PC-9 (cell line): ENCODE measurements at regions of chr5 and their contacts with region 1.

Region 1: GRCh38 chr5:37931541-37931940 is 91.7 kb upstream of the GDNF start:
- DNase-seq: no peak
- H3K4me3 ChIP-seq: no peak overlapping the region
- H3K27ac ChIP-seq: no peak overlapping the region
- H3K4me1 ChIP-seq: no peaks in the 10 kb centered on the region
- H3K27me3 ChIP-seq: peaks cover 38% of the 10 kb centered on the region
- CTCF ChIP-seq: no peak

Region 2: DNA sequence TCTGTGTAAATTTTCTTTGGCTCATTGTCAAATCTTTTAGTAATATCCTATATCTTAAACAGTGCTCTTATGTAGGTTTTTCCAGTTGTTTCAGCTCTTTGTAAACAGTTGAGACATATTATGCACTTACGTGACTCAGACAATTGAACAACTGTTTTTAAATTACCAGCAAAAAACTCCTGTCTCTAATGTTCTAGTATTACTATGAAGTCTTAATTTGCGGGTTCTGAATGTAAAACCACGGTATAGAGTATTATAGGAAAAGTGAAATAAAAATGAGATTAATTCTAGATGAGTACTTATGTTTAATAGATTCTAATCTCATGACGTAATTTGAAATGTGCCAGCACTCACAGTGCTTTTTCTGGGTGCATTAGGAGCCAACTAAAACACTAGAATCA is 227.7 kb before region 1 on chr5:
- CTCF ChIA-PET with region 1: no interaction called
- POLR2A ChIA-PET with region 1: no interaction called
- intact Hi-C with region 1: no loop called
- DNase-seq: no peak
- H3K4me3 ChIP-seq: no peak overlapping the region
- H3K27ac ChIP-seq: no peak overlapping the region
- H3K4me1 ChIP-seq: no peaks in the 10 kb centered on the region
- H3K27me3 ChIP-seq: no peaks in the 10 kb centered on the region
- CTCF ChIP-seq: no peak

Region 3: GRCh38 chr5:37966291-37966690 is 34.8 kb after region 1 on chr5:
- CTCF ChIA-PET with region 1: interaction called, 10 read pairs
- POLR2A ChIA-PET with region 1: no interaction called
- intact Hi-C with region 1: no loop called
- DNase-seq: no peak
- H3K4me3 ChIP-seq: no peak overlapping the region
- H3K27ac ChIP-seq: no peak overlapping the region
- H3K4me1 ChIP-seq: no peaks in the 10 kb centered on the region
- H3K27me3 ChIP-seq: no peaks in the 10 kb centered on the region
- CTCF ChIP-seq: no peak

Region 4: GRCh38 chr5:38008198-38008597 is 76.7 kb after region 1 on chr5:
- CTCF ChIA-PET with region 1: no interaction called
- POLR2A ChIA-PET with region 1: no interaction called
- intact Hi-C with region 1: no loop called
- DNase-seq: no peak
- H3K4me3 ChIP-seq: no peak overlapping the region
- H3K27ac ChIP-seq: no peak overlapping the region
- H3K4me1 ChIP-seq: no peaks in the 10 kb centered on the region
- H3K27me3 ChIP-seq: peaks cover 73% of the 10 kb centered on the region
- CTCF ChIP-seq: no peak